A673 (cell line): ENCODE measurements at regions of chr18 and their contacts with region 1.

Region 1: DNA sequence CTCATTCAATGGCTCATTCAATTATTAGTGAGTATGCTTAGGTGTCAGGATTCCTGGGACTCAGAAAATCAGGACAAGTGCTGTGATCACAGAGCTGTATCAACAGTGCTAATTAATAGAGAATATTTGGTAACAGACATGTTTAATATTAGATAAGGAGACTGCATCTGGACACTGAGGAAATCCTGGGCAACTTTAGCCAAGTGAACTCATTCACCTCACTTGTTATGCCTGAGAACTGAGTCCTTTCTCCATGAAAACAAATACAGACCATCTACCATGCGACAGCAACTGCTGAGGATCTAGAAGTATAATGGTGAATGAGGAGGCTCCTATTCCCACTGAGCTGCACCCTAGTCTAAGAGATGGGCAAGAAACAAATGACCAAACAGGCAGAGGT is 23.1 kb upstream of the ATP8B1 start:
- DNase-seq: no peak
- H3K4me3 ChIP-seq: no peak overlapping the region
- H3K27ac ChIP-seq: no peak overlapping the region
- H3K4me1 ChIP-seq: no peaks in the 10 kb centered on the region
- H3K27me3 ChIP-seq: no peaks in the 10 kb centered on the region
- CTCF ChIP-seq: no peak

Region 2: DNA sequence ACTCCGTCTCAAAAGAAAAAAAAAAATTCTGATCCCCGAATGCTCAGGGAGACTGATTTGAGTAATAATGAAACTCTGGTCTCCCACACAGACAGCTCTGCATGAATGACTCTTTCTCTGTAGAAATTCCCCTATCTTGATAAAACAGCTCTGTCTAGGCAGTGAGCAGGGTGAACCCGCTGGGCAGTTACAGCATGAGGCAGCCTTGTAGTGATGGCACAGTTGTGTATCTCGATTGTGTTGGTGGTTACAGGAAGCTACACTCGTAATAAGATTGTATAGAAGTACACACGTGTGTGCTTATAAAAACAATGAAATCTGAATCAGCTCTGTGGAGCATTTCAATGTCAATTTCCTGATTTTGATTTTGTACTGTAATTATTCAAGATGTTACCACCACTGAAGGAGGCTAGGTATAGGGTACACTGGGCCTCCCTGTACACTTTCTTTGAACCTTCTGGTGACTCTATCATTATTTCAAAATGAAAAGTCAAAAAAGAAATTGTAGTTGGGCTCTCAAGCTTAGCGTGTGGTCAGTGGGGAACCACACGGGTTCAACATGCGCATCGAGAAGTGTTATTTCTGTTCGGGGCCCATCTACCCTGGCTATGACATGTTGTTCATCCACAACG is 11.8 kb after region 1 on chr18:
- CTCF ChIA-PET with region 1: no interaction called
- POLR2A ChIA-PET with region 1: no interaction called
- intact Hi-C with region 1: no loop called
- DNase-seq: no peak
- H3K4me3 ChIP-seq: no peak overlapping the region
- H3K27ac ChIP-seq: no peak overlapping the region
- H3K4me1 ChIP-seq: peaks cover 36% of the 10 kb centered on the region
- H3K27me3 ChIP-seq: no peaks in the 10 kb centered on the region
- CTCF ChIP-seq: no peak

Region 3: DNA sequence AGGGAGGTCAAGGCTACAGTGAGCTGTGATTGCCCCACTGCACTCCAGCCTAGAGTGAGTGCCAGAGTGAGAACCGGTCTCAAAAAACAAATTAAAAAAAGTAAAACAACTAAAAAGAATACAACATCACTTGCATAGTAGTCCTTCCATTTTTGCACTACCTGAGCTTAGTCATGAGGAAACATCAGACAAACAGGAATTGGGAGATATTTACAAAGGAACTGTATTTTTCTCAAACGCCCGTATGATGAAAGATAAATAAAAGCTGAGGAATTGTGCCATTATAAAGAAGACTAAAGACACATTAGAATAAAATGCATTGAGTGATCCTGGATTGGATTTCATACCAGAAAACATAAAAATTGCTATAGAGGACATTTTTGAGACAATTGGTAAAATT is 26.9 kb after region 1 on chr18:
- CTCF ChIA-PET with region 1: no interaction called
- POLR2A ChIA-PET with region 1: interaction called, 13 read pairs
- intact Hi-C with region 1: no loop called
- DNase-seq: no peak
- H3K4me3 ChIP-seq: no peak overlapping the region
- H3K27ac ChIP-seq: no peak overlapping the region
- H3K4me1 ChIP-seq: peaks cover 37% of the 10 kb centered on the region
- H3K27me3 ChIP-seq: no peaks in the 10 kb centered on the region
- CTCF ChIP-seq: no peak

Region 4: GRCh38 chr18:58407649-58408407 is 581.6 kb after region 1 on chr18:
- CTCF ChIA-PET with region 1: no interaction called
- POLR2A ChIA-PET with region 1: no interaction called
- intact Hi-C with region 1: no loop called
- DNase-seq: no peak
- H3K4me3 ChIP-seq: no peak overlapping the region
- H3K27ac ChIP-seq: no peak overlapping the region
- H3K4me1 ChIP-seq: no peaks in the 10 kb centered on the region
- H3K27me3 ChIP-seq: peaks cover 2% of the 10 kb centered on the region
- CTCF ChIP-seq: no peak